ENCODE measurements at regions of chr5 and their contacts with region 1.

Region 1: GRCh38 chr5:50962934-50963872 is 296.8 kb downstream of the PARP8 start:
- DNase-seq: peak; percentile 86
- H3K4me3 Mint-ChIP-seq: peak overlapping the region; percentile 75
- H3K27ac Mint-ChIP-seq: peak overlapping the region; percentile 70
- H3K4me1 Mint-ChIP-seq: peaks cover 22% of the 10 kb centered on the region
- H3K27me3 Mint-ChIP-seq: no peaks in the 10 kb centered on the region
- CTCF ChIP-seq: peak; percentile 94

Region 2: GRCh38 chr5:50984640-50985039 is 21.4 kb after region 1 on chr5:
- CTCF ChIA-PET with region 1: no interaction called
- intact Hi-C with region 1: no loop called
- DNase-seq: no peak
- H3K4me3 Mint-ChIP-seq: no peak overlapping the region
- H3K27ac Mint-ChIP-seq: no peak overlapping the region
- H3K4me1 Mint-ChIP-seq: no peaks in the 10 kb centered on the region
- H3K27me3 Mint-ChIP-seq: no peaks in the 10 kb centered on the region
- CTCF ChIP-seq: no peak

Region 3: DNA sequence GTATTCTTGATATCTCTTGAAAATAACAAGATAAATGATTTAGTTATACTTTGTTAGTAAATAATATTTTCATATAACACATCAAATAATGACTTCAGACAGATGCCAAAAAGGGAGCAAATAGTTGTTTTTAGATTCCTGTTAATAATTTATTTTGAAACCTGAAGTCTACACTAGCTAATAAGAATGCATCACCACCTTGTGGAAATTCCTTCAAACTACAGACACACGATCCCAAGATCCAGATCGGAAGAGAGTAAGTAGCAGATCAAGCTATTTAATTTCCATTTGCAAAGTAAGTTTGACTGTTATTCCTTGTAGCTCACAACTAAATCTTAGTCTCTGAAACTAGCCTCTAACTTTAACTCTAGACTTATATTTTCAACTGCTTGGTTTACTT is 384.5 kb after region 1 on chr5:
- CTCF ChIA-PET with region 1: interaction called, 13 read pairs
- intact Hi-C with region 1: loop called (anchors 1 kb)
- DNase-seq: no peak
- H3K4me3 Mint-ChIP-seq: no peak overlapping the region
- H3K27ac Mint-ChIP-seq: no peak overlapping the region
- H3K4me1 Mint-ChIP-seq: peaks cover 23% of the 10 kb centered on the region
- H3K27me3 Mint-ChIP-seq: no peaks in the 10 kb centered on the region
- CTCF ChIP-seq: peak; percentile 19

Region 4: DNA sequence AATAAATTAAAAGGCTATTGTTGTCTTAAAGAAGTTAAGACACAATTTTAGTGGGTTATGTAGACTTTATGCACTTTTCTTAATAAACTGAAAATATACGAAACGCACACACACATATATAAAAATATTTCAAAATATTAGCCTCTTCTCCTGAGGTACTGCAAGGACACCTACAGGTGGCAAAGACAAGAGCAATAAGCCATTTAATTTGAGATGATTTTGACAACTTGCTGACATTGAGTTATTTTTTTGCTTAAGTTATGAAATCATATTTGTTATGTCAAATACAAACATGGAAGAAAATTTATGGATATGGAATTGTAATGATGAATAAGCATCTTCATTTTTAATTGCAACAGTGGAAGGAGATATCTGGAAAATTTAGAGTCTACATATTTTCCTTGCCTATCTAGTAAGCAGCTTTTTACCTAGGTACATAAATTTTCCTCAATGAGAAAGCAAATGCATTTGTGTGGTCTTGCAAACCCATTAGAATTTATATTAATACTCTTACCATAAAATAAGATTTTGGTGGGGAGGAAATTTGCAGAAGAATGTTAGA is 721.7 kb after region 1 on chr5:
- CTCF ChIA-PET with region 1: no interaction called
- intact Hi-C with region 1: loop called (anchors 1 kb)
- DNase-seq: no peak
- H3K4me3 Mint-ChIP-seq: no peak overlapping the region
- H3K27ac Mint-ChIP-seq: no peak overlapping the region
- H3K4me1 Mint-ChIP-seq: no peaks in the 10 kb centered on the region
- H3K27me3 Mint-ChIP-seq: no peaks in the 10 kb centered on the region
- CTCF ChIP-seq: peak; percentile 39

Region 5: DNA sequence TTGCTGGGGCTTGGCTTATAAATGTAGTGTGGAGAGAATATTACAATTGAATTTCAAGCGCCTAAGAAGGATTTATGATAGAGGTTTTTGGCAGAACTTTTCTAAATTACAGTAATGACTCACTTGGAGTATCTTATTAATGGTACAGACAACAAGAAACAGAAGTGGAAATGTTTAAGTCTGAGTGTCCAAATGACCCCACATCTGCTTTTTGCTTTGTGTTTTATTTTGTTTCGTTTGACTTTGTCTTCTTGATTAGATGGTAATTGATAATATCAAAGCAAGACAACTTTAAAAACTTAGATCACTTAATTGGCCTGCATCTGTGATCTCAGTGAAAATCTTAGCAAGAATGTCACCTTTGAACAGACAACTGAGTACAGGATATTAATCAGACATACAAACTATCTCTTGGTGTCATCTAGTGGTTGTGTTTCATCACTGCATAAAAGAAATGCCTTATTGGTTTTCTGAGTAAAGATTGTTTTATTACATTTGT is 997.5 kb after region 1 on chr5:
- CTCF ChIA-PET with region 1: no interaction called
- intact Hi-C with region 1: loop called (anchors 2 kb)
- DNase-seq: no peak
- H3K4me3 Mint-ChIP-seq: no peak overlapping the region
- H3K27ac Mint-ChIP-seq: no peak overlapping the region
- H3K4me1 Mint-ChIP-seq: no peaks in the 10 kb centered on the region
- H3K27me3 Mint-ChIP-seq: no peaks in the 10 kb centered on the region
- CTCF ChIP-seq: no peak

Region 6: GRCh38 chr5:52356311-52356918 is 1393.2 kb after region 1 on chr5:
- CTCF ChIA-PET with region 1: interaction called, 3 read pairs
- intact Hi-C with region 1: loop called (anchors 1 kb)
- DNase-seq: no peak
- H3K4me3 Mint-ChIP-seq: no peak overlapping the region
- H3K27ac Mint-ChIP-seq: no peak overlapping the region
- H3K4me1 Mint-ChIP-seq: no peaks in the 10 kb centered on the region
- H3K27me3 Mint-ChIP-seq: no peaks in the 10 kb centered on the region
- CTCF ChIP-seq: peak; percentile 59

Region 7: DNA sequence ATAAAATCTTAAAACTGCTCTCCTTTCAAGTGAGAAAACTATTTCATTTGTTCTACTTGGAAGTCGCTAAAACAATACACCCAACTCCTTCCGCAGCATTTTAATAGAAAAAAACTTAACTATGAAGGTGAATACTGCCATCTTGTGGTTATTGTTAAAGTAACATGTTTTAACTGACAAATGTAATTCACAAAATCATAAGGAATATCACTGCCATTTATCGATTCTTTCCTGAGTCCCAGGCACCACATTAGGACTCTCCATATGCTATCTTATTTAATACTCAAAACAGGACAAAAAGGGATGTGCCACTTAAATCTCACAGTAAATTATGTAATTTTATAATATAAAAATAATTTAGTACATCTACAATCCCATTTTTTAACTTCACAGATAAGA is 1694.0 kb after region 1 on chr5:
- CTCF ChIA-PET with region 1: no interaction called
- intact Hi-C with region 1: loop called (anchors 1 kb)
- DNase-seq: no peak
- H3K4me3 Mint-ChIP-seq: no peak overlapping the region
- H3K27ac Mint-ChIP-seq: no peak overlapping the region
- H3K4me1 Mint-ChIP-seq: no peaks in the 10 kb centered on the region
- H3K27me3 Mint-ChIP-seq: no peaks in the 10 kb centered on the region
- CTCF ChIP-seq: no peak